Esophagus squamous epithelium (tissue), 5 donors: ENCODE measurements at regions of chr2 and their contacts with region 1.

Region 1: DNA sequence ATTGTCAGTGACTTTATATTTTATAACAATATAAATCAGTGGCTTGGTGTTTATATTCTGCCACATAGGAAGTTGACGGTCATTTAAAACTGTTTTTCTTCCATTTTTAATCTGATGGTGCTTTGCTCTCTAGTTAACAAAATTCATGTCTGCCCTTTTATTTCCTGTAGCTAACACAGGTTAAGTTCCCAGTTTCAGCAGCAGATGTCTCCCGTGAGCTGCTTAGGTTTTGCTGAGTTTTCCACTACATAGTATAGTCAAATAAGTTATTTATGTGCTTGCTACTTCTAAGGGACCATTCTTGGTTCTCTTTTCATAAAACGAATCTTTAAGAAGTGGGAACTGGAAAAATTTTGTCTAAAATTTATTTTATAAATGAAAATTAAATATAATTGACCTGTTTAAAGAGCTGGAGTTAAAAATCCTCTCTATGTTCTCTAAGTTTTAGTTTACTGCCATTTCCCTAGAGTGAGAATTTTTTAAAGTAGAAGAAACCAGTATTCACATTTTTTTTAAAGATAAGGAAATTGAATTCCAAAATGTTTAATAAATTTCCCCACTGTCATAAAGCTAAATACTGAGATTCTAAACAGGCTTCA is 20.6 kb downstream of the HTR2B start:
- DNase-seq: peak; percentile 0
- H3K4me3 ChIP-seq: no peak overlapping the region
- H3K27ac ChIP-seq: no peak overlapping the region
- H3K4me1 ChIP-seq: peaks cover 0 to 5% (median 0%) of the 10 kb centered on the region in 3 donors
- H3K27me3 ChIP-seq: no peaks in the 10 kb centered on the region
- CTCF ChIP-seq: peak; percentile 56 to 83 (median 77)
- POLR2A ChIP-seq: no peak

Region 2: GRCh38 chr2:231058761-231059550 is 45.3 kb before region 1 on chr2:
- intact Hi-C with region 1: no loop called
- DNase-seq: no peak
- H3K4me3 ChIP-seq: no peak overlapping the region
- H3K27ac ChIP-seq: peak overlapping the region in 2 of 4 donors; percentile 0 to 31
- H3K4me1 ChIP-seq: peaks cover 4 to 53% (median 27%) of the 10 kb centered on the region in 3 donors
- H3K27me3 ChIP-seq: no peaks in the 10 kb centered on the region
- CTCF ChIP-seq: no peak
- POLR2A ChIP-seq: no peak

Region 3: DNA sequence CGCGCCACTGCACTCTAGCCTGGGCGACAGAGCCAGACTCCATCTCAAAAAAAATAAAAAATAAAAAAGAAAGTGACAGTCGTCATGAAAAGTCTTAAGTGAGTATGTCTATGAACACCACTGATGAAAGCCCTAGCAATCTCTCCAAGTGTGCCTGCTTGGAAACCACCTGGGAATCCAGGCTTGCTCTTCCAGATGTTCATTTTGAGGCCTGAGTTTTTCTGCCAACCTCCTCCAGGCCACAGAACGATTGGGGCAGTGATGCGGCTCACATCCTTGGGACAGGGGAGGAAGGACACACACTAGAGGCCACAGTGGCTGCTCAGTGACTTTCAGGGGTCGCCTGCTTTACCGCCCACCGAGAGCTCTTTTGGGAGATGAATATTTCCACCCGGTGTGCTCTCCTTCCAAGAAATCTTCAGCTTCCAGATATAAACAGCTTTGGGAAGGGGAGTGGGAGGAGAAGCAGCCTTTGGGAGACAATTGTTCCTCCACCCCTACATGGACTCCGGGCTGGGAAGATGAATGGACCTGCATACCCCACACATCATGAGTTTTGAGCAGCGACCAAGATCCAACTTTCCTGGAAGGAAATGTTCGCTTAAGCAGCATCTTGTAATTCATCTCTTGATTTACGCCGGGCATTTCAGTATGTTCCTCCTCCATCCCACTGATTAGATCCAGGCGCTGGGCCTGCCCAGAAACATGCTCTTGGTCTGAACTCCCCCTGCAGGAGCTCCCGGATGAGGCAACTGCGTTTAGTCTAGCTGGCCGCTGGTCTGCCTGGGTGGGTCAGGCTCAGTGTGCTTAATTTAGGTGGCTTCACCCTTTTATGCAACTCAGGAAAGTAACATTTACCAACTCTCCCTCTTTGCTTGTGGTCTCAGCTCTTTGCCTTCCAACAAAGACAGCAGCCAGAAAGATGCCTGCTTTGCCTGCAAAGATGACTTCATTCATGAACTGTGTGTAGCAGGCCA is 88.0 kb after region 1 on chr2:
- intact Hi-C with region 1: no loop called
- DNase-seq: no peak
- H3K4me3 ChIP-seq: no peak overlapping the region
- H3K27ac ChIP-seq: peak overlapping the region; percentile 7 to 92 (median 82)
- H3K4me1 ChIP-seq: peaks cover 0 to 33% (median 15%) of the 10 kb centered on the region in 3 donors
- H3K27me3 ChIP-seq: peaks cover 0 to 37% (median 2%) of the 10 kb centered on the region in 4 donors
- CTCF ChIP-seq: peak in 4 of 6 experiments; percentile 20 to 49 (median 34)
- POLR2A ChIP-seq: no peak

Region 4: DNA sequence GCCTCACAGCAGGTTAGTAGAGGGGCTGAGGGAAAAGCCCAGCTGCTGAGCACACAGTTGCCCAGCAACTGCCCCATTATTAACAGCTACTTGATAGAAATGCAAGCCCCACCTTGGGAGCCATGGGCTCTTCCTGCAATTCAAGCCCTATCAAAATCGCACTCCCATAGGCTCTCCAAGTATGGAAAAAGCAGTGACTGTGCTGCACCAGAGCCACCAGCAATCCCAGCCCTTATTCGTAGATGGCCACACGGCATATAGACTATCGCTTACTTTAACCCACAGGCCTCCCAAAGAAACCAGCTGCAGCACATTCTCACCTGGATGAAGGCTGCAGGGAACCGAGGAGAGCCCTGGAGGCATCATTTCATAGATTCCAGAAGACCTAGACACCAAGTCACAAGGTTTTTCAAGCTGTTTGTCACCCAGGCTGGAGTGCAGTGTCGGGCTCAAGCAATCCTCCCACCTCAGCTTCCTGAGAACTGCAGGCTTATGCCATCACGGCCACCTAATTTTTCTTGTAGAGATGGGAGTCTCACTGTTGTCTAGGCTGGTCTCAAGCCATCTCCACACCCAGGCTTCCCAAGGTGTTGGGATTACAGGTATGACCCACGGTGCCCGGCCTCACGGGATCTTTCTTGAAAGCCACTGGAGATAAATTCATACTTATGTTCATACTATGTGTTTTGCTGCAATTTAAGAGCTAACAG is 348.7 kb after region 1 on chr2:
- intact Hi-C with region 1: loop called (anchors 10 kb)
- DNase-seq: no peak
- H3K4me3 ChIP-seq: no peak overlapping the region
- H3K27ac ChIP-seq: peak overlapping the region in 2 of 4 donors; percentile 5 to 28
- H3K4me1 ChIP-seq: peaks cover 0 to 3% (median 0%) of the 10 kb centered on the region in 3 donors
- H3K27me3 ChIP-seq: no peaks in the 10 kb centered on the region
- CTCF ChIP-seq: no peak
- POLR2A ChIP-seq: no peak